B cell (primary cell): ENCODE measurements at regions of chr6 and their contacts with region 1.

Region 1: GRCh38 chr6:31546962-31547726 is at the start of gene NFKBIL1:
- DNase-seq: peak; percentile 96
- ATAC-seq: peak; percentile 84
- H3K4me3 ChIP-seq: peak within 1 kb of the TSS; percentile 40 to 69 (median 56)
- H3K4me3 Mint-ChIP-seq: peak within 1 kb of the TSS; percentile 87
- H3K27ac ChIP-seq: peak within 1 kb of the TSS; percentile 80 to 83
- H3K27ac Mint-ChIP-seq: peak within 1 kb of the TSS; percentile 88
- H3K4me1 ChIP-seq: peaks cover 30 to 53% of the 10 kb centered on the region in 2 donors
- H3K4me1 Mint-ChIP-seq: peaks cover 48% of the 10 kb centered on the region
- H3K27me3 ChIP-seq: no peaks in the 10 kb centered on the region
- H3K27me3 Mint-ChIP-seq: no peaks in the 10 kb centered on the region
- CTCF ChIP-seq: peak; percentile 50
- total RNA-seq, gene NFKBIL1: 17.8 and 18.4 TPM in 2 replicates

Region 2: GRCh38 chr6:31559958-31560696 is 13.0 kb after region 1 on chr6:
- CTCF ChIA-PET with region 1: interaction called, 126 read pairs
- POLR2A ChIA-PET with region 1: interaction called, 5 read pairs
- intact Hi-C with region 1: loop called (anchors 1 kb)
- DNase-seq: peak; percentile 83
- ATAC-seq: peak; percentile 64
- H3K4me3 ChIP-seq: peak overlapping the region; percentile 4 to 61 (median 45)
- H3K4me3 Mint-ChIP-seq: peak overlapping the region; percentile 92
- H3K27ac ChIP-seq: peak overlapping the region; percentile 80 to 87
- H3K27ac Mint-ChIP-seq: peak overlapping the region; percentile 94
- H3K4me1 ChIP-seq: peaks cover 80 to 81% of the 10 kb centered on the region in 2 donors
- H3K4me1 Mint-ChIP-seq: peaks cover 82% of the 10 kb centered on the region
- H3K27me3 ChIP-seq: no peaks in the 10 kb centered on the region
- H3K27me3 Mint-ChIP-seq: no peaks in the 10 kb centered on the region
- CTCF ChIP-seq: no peak

Region 3: GRCh38 chr6:31580807-31581433 is 33.8 kb after region 1 on chr6:
- CTCF ChIA-PET with region 1: interaction called, 2,241 read pairs
- POLR2A ChIA-PET with region 1: interaction called, 1,450 read pairs
- intact Hi-C with region 1: loop called (anchors 1 kb)
- DNase-seq: peak; percentile 89
- ATAC-seq: peak; percentile 62
- H3K4me3 ChIP-seq: peak overlapping the region; percentile 83 to 100 (median 96)
- H3K4me3 Mint-ChIP-seq: peak overlapping the region; percentile 98
- H3K27ac ChIP-seq: peak overlapping the region; percentile 95 to 97
- H3K27ac Mint-ChIP-seq: peak overlapping the region; percentile 99
- H3K4me1 ChIP-seq: peaks cover 71 to 83% of the 10 kb centered on the region in 2 donors
- H3K4me1 Mint-ChIP-seq: peaks cover 82% of the 10 kb centered on the region
- H3K27me3 ChIP-seq: no peaks in the 10 kb centered on the region
- H3K27me3 Mint-ChIP-seq: no peaks in the 10 kb centered on the region
- CTCF ChIP-seq: peak; percentile 99

Region 4: DNA sequence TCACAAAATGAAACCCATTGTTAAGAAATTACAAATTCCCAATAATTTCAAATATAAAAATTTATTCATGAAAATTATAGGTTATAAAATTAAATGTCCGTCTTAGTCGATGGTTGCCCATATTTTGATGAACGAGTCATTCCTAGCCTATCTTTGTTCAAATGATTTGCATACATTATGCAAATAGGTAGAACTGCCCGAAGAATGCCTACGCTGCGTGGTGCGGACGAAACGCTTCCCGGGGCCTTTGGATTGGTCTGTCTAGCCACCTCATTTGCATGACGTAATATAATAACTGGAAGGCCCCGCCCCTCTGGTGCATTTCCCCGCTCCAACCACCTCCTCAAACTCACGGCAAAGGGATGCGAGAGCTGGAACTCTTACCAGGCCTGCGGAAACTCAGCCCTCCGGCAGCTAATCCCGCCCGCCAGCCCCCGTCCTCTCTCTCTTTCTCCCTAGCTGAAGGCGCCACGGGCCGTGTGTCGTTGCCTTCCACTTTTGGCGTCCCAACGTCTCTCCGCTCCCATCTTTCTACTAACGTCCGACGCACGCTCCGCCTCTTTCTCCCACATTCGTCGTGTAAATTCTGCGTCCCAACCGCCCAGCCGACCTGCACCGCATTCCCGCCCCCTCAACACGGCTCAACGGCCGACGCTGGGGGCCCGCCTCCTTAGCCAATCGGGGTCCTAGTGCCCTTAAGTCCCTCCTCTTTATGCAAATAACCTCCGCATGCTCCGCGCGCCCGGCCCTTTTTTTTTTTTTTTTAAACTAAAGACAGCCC is 72.9 kb after region 1 on chr6:
- CTCF ChIA-PET with region 1: interaction called, 11 read pairs
- POLR2A ChIA-PET with region 1: interaction called, 6 read pairs
- intact Hi-C with region 1: loop called (anchors 1 kb)
- DNase-seq: peak; percentile 99
- ATAC-seq: peak; percentile 84
- H3K4me3 ChIP-seq: peak overlapping the region; percentile 8 to 90 (median 84)
- H3K4me3 Mint-ChIP-seq: peak overlapping the region; percentile 86
- H3K27ac ChIP-seq: peak overlapping the region; percentile 97 to 99
- H3K27ac Mint-ChIP-seq: peak overlapping the region; percentile 95
- H3K4me1 ChIP-seq: peaks cover 26 to 35% of the 10 kb centered on the region in 2 donors
- H3K4me1 Mint-ChIP-seq: peaks cover 45% of the 10 kb centered on the region
- H3K27me3 ChIP-seq: no peaks in the 10 kb centered on the region
- H3K27me3 Mint-ChIP-seq: no peaks in the 10 kb centered on the region
- CTCF ChIP-seq: no peak

Region 5: GRCh38 chr6:31901953-31902643 is 355.0 kb after region 1 on chr6 and contains the start of gene ZBTB12:
- CTCF ChIA-PET with region 1: no interaction called
- POLR2A ChIA-PET with region 1: no interaction called
- intact Hi-C with region 1: loop called (anchors 2 kb)
- DNase-seq: peak; percentile 93
- ATAC-seq: peak; percentile 64
- H3K4me3 ChIP-seq: peak within 1 kb of the TSS; percentile 27 to 82 (median 77)
- H3K4me3 Mint-ChIP-seq: peak within 1 kb of the TSS; percentile 94
- H3K27ac ChIP-seq: peak within 1 kb of the TSS; percentile 76 to 79
- H3K27ac Mint-ChIP-seq: peak within 1 kb of the TSS; percentile 93
- H3K4me1 ChIP-seq: peaks cover 13 to 23% of the 10 kb centered on the region in 2 donors
- H3K4me1 Mint-ChIP-seq: peaks cover 32% of the 10 kb centered on the region
- H3K27me3 ChIP-seq: no peaks in the 10 kb centered on the region
- H3K27me3 Mint-ChIP-seq: no peaks in the 10 kb centered on the region
- CTCF ChIP-seq: no peak
- total RNA-seq, gene ZBTB12: 8.1 and 8.9 TPM in 2 replicates